ENCODE measurements at regions of chr1 and their contacts with region 1.

Region 1: GRCh38 chr1:15820478-15820877 is 13.0 kb upstream of the UQCRHL start:
- DNase-seq: no peak
- H3K4me3 ChIP-seq: no peak overlapping the region
- H3K27ac ChIP-seq: no peak overlapping the region
- H3K27me3 ChIP-seq: no peaks in the 10 kb centered on the region
- CTCF ChIP-seq: no peak

Region 2: DNA sequence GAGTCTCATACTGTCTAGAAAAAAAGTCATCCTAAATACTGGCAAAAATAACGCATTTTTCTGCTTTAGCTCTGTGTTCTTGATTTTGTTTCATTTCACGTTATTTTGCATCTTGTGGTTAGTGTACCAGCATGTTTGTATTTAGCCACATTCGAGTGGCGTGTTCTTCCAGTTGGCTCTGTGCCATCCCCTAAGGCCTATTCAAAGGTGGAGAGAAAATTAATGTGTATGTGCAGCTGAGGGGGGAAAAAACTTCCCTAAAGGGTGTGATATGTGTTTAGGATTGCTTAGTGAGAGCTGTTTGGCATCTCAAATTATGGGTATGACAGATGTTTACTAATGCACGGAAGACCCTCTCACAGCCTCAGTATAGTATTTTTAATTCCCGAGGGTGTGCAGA is 281.7 kb before region 1 on chr1:
- CTCF ChIA-PET with region 1: no interaction called
- POLR2A ChIA-PET with region 1: no interaction called
- DNase-seq: no peak
- H3K4me3 ChIP-seq: no peak overlapping the region
- H3K27ac ChIP-seq: no peak overlapping the region
- H3K27me3 ChIP-seq: no peaks in the 10 kb centered on the region
- CTCF ChIP-seq: no peak

Region 3: DNA sequence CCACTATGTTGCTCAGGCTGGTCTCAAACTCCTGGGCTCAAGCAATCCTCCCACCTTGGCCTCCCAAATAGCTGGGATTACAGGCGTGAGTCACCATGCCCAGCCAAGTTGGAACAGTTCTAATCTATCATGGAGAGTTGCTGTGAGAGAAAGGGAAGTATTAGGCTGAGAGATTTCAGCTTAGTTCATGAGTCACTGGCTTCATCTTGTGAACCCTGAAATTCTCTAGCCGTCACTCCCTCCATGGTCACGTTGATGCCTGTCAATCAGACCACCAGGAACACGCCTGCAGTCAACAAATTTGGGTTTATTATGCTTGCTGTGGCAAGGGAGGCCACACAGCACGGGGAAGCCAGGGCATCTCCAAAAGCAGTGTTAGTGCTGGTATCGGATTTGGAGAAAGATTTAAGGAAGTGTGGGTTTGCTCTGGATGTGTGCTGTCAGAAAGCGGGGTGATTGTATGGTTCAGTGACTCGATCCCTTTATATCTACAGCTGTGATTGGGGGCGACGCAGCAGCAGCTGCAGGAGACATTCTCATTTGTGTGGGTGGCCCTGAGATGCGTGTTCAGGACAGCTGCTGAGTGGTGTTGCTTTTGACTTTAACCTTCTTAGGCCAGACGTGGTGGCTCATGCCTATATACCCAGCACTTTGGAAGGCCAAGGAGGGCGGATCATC is 31.7 kb before region 1 on chr1:
- CTCF ChIA-PET with region 1: interaction called, 17 read pairs
- POLR2A ChIA-PET with region 1: interaction called, 4 read pairs
- DNase-seq: no peak
- H3K4me3 ChIP-seq: no peak overlapping the region
- H3K27ac ChIP-seq: peak overlapping the region; percentile 24
- H3K27me3 ChIP-seq: no peaks in the 10 kb centered on the region
- CTCF ChIP-seq: no peak

Region 4: DNA sequence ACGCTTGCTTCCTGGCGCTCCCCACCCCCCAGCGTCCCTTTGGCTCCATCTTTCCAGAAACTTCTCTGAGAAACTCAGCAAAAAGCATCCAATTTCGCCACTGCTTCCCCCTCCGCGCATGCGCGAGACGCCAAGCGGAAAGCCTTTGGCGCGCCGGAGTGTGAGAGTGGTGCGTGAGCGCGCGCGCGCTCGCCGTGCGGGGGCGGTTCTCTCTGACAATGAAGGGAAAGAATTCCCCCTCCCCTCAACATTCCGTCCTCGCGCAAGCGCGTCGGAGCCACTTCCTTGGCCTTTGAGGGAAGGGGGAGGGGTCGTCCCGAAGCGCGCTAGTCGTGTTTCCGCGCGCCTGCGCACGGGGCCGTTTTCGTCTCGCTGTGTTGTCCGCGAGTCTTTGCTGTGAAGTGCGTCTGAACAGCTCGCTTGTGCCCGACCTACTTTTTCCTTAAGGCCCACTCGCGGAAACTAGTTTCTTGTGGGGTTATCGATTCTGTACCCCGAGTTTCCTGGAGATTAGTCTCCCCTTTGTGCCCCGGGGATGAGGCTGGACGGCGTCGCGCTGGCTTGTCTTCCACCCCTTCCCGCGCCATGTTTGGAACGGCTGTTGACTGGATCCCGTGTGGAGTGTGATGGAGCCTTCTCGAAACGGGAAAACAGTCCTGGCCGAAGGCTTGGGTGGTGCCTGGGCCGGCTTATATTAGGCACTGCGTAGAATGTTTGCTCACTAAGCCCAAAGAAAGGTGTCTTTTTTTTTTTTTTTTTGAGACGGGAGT is 15.4 kb after region 1 on chr1:
- CTCF ChIA-PET with region 1: interaction called, 58 read pairs
- POLR2A ChIA-PET with region 1: interaction called, 3 read pairs
- DNase-seq: peak; percentile 98
- H3K4me3 ChIP-seq: peak overlapping the region; percentile 88
- H3K27ac ChIP-seq: peak overlapping the region; percentile 99
- H3K27me3 ChIP-seq: no peaks in the 10 kb centered on the region
- CTCF ChIP-seq: no peak

Region 5: GRCh38 chr1:15916417-15916816 is 95.9 kb after region 1 on chr1:
- CTCF ChIA-PET with region 1: interaction called, 13 read pairs
- POLR2A ChIA-PET with region 1: interaction called, 4 read pairs
- DNase-seq: no peak
- H3K4me3 ChIP-seq: no peak overlapping the region
- H3K27ac ChIP-seq: peak overlapping the region; percentile 25
- H3K27me3 ChIP-seq: no peaks in the 10 kb centered on the region
- CTCF ChIP-seq: no peak

Region 6: DNA sequence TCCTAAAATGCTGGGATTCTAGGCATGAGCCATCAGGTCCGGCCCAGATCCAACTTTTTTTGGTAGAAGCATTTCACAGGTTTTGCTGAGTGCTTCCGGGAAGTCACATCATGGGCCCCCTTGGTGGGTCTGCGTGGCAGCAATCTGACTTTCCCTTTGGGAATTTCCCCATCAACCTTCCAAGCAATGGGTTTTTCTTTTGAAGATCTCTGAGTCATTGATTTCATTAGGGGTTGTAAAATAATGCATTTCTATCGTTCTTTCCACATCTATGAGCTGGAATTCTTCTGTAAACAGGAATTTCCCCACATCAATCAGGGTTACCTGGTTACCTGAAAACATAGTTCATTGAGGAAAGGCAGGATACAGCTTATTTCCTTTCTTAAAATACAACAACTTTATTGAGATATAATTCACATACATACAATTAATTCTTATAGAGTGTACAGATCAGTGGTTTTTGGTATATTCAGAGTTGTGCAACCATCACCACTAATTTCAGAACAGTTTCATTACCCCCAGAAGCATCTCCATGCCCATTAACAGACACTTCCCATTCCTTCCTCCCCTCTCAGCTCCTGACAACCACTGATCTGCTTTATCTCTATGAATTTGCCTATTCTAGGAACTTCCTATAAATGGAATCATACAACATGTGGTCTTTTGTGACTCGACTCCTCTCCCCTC is 165.3 kb after region 1 on chr1:
- CTCF ChIA-PET with region 1: interaction called, 11 read pairs
- POLR2A ChIA-PET with region 1: no interaction called
- DNase-seq: no peak
- H3K4me3 ChIP-seq: no peak overlapping the region
- H3K27ac ChIP-seq: no peak overlapping the region
- H3K27me3 ChIP-seq: peaks cover 2% of the 10 kb centered on the region
- CTCF ChIP-seq: no peak

Region 7: DNA sequence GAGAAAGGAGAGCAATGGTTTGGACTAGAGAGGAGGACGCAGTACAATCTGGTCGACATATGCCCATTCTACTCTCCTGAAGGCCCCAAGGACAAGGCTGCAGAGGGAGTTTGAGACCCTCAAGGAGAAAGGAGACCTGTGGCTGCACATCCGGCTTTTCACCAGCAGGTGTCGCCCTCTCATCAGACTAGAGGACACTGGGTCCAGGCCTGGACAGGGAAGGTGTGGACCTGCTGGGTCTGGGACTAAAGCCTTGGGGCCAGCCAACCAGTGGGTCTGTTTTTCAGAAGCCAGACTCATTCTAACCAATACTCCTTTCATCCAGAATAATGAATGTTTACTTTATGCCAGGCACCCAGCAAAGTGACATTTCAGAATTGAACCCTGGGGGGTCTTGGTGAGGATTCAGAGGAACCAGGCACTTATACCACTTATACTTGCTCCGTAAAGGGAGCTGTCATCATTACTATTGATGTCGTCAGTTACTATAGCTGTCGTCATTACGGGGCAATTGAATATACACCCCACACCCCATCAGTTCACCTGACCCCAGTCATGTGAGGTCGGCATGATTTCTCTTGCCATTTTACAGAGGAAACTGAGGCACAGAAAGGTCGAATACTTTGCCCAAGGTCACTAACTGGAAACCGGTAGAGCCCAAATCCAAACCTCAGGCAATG is 188.7 kb after region 1 on chr1:
- CTCF ChIA-PET with region 1: interaction called, 10 read pairs
- POLR2A ChIA-PET with region 1: no interaction called
- DNase-seq: no peak
- H3K4me3 ChIP-seq: no peak overlapping the region
- H3K27ac ChIP-seq: no peak overlapping the region
- H3K27me3 ChIP-seq: no peaks in the 10 kb centered on the region
- CTCF ChIP-seq: peak; percentile 95

Region 8: GRCh38 chr1:17016317-17016661 is 1195.8 kb after region 1 on chr1:
- CTCF ChIA-PET with region 1: no interaction called
- POLR2A ChIA-PET with region 1: no interaction called
- DNase-seq: no peak
- H3K4me3 ChIP-seq: no peak overlapping the region
- H3K27ac ChIP-seq: no peak overlapping the region
- H3K27me3 ChIP-seq: no peaks in the 10 kb centered on the region
- CTCF ChIP-seq: no peak